Left ventricle myocardium inferior (tissue), 1 donor: ENCODE measurements at regions of chr2 and their contacts with region 1.

Region 1: DNA sequence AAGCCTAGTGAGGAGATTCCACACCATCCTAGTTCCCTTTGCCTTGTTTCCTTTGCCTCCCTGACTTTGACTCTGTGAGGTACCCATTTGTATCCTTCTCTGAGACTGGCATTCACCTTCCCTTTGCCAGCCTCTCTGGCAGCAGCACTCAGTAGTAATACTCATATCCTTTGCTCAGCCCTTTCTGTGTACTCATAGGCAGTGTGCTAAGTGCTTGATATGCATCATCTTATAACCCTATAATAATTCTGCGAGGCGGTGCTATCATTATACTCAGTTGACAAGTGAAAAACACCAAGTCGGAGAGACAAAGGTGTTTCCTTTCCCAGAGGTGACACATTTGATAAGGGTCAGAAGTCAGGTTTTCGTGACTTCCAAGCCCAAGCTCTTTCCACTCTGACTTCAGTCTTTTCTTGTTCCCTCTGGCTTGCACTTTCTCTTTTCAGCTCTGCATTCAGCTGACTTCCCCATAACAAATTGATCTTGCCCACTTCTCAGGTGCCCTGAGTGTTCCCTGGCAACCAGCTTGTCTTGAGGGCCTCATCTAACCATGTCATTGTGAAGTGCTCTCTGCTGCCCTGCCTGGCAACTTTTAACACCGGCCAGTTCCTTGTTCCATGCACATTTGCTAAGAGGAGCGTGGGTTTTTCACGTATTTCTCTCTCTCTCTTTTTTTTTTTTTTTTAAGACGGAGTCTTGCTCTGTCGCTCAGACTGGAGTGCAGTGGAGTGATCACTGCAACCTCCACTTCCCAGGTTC is 94.5 kb upstream of the UPP2 start:
- DNase-seq: no peak
- H3K4me3 ChIP-seq: no peak overlapping the region
- H3K27ac ChIP-seq: no peak overlapping the region
- H3K4me1 ChIP-seq: peaks cover 6% of the 10 kb centered on the region
- H3K27me3 ChIP-seq: no peaks in the 10 kb centered on the region
- CTCF ChIP-seq: no peak

Region 2: DNA sequence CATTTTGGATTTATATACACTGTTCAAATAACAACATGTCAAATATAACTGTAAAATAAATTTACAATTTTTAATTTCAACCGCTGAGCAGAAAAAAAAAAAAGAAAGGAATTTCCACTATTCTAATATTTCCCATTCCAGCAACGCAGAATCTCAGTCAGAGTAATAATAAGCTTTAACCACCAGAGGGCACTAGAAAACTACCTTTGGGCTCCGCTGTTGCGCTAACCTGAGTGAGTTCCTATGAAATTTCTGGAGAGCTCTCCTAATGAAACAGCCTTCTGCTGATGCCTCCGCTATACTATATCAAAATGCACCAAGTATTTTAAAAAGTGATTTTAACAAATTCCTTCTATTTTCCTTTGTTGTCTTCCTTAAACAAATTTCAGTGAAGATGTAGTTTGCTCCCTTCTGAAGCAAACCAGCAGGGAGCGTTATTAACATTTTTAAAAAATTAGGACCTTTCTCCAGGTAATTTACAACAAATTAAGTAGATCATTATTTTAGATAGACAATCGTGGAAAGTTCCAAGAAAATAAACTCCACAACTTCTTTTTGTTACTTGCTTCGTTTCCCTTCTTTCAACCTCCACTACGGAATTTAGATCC is 704.5 kb before region 1 on chr2:
- intact Hi-C with region 1: loop called (anchors 10 kb)
- DNase-seq: no peak
- H3K4me3 ChIP-seq: no peak overlapping the region
- H3K27ac ChIP-seq: no peak overlapping the region
- H3K4me1 ChIP-seq: no peaks in the 10 kb centered on the region
- H3K27me3 ChIP-seq: peaks cover 21% of the 10 kb centered on the region
- CTCF ChIP-seq: peak; percentile 85

Region 3: GRCh38 chr2:157492189-157492773 is 514.9 kb before region 1 on chr2:
- intact Hi-C with region 1: loop called (anchors 10 kb)
- DNase-seq: peak; percentile 41
- H3K4me3 ChIP-seq: no peak overlapping the region
- H3K27ac ChIP-seq: no peak overlapping the region
- H3K4me1 ChIP-seq: no peaks in the 10 kb centered on the region
- H3K27me3 ChIP-seq: no peaks in the 10 kb centered on the region
- CTCF ChIP-seq: peak; percentile 76

Region 4: GRCh38 chr2:157784169-157784822 is 222.8 kb before region 1 on chr2:
- intact Hi-C with region 1: loop called (anchors 5 kb)
- DNase-seq: peak; percentile 46
- H3K4me3 ChIP-seq: peak overlapping the region; percentile 45
- H3K27ac ChIP-seq: peak overlapping the region; percentile 84
- H3K4me1 ChIP-seq: peaks cover 80% of the 10 kb centered on the region
- H3K27me3 ChIP-seq: no peaks in the 10 kb centered on the region
- CTCF ChIP-seq: no peak